ENCODE measurements at regions of chr7 and their contacts with region 1.

Region 1: GRCh38 chr7:5363729-5364128 is 59.9 kb downstream of the TNRC18 start:
- DNase-seq: no peak
- H3K4me3 ChIP-seq: no peak overlapping the region
- H3K27ac ChIP-seq: peak overlapping the region in 1 of 2 donors; percentile 26
- H3K4me1 ChIP-seq: peaks cover 0 to 55% (median 23%) of the 10 kb centered on the region in 4 donors
- H3K27me3 ChIP-seq: no peaks in the 10 kb centered on the region
- CTCF ChIP-seq: no peak

Region 2: GRCh38 chr7:5445981-5446594 is 82.4 kb after region 1 on chr7:
- intact Hi-C with region 1: loop called (anchors 5 kb)
- DNase-seq: no peak
- H3K4me3 ChIP-seq: no peak overlapping the region
- H3K27ac ChIP-seq: no peak overlapping the region
- H3K4me1 ChIP-seq: peaks cover 0 to 8% (median 3%) of the 10 kb centered on the region in 4 donors
- H3K27me3 ChIP-seq: no peaks in the 10 kb centered on the region
- CTCF ChIP-seq: no peak

Measured in tibial artery (tissue), 4 donors.